Heart right ventricle (tissue), 16 donors: ENCODE measurements at regions of chr11 and their contacts with region 1.

Region 1: GRCh38 chr11:107505647-107506225 is 48.1 kb upstream of the CWF19L2 start:
- DNase-seq: no peak
- ATAC-seq: no peak
- H3K4me3 ChIP-seq: no peak overlapping the region
- H3K27ac ChIP-seq: no peak overlapping the region
- H3K4me1 ChIP-seq: peaks cover 0 to 6% (median 0%) of the 10 kb centered on the region in 9 donors
- H3K27me3 ChIP-seq: no peaks in the 10 kb centered on the region
- CTCF ChIP-seq: no peak

Region 2: DNA sequence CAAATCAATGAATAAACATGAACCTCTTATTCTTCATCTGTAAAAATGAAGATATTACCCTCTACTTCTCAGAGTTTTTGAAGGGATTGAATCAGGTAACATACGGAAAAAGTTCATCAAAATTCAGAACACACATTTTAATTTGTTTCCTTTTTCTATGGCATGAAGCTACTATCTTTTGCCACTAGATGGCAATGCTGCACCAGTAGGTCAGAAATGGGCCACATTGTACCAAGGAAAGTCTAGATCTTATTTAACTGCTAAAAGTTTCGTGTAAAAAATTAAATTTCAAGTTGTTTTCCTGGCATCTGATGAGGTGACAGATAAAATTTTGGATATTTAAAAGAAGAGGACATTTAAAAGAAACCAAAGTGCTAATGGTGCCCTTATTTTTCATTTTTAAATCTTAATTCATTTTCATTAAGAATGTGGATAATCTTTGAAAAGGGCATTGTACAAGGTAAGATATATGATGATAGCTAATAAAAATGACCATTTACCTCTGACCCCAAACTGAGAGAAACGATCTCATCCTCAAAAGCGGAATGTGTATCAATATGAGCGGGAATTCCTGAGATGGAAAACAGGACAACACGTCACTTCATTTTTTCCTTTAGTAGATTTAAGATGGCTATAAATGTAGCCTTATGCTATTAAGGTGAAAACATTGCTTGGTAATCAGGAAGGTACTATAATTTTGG is 43.7 kb after region 1 on chr11:
- intact Hi-C with region 1: loop called in 1 of 10 experiments (anchors 5 kb)
- DNase-seq: peak in 1 of 2 donors; percentile 14
- ATAC-seq: no peak
- H3K4me3 ChIP-seq: no peak overlapping the region
- H3K27ac ChIP-seq: no peak overlapping the region
- H3K4me1 ChIP-seq: no peaks in the 10 kb centered on the region
- H3K27me3 ChIP-seq: no peaks in the 10 kb centered on the region
- CTCF ChIP-seq: peak; percentile 66 to 89 (median 82)